MCF 10A (cell line): ENCODE measurements at regions of chr20 and their contacts with region 1.

Region 1: GRCh38 chr20:17431621-17432364 is 99.4 kb downstream of the BFSP1 start:
- DNase-seq: peak; percentile 67
- H3K4me3 Mint-ChIP-seq: no peak overlapping the region
- H3K27ac Mint-ChIP-seq: no peak overlapping the region
- H3K4me1 Mint-ChIP-seq: no peaks in the 10 kb centered on the region
- H3K27me3 Mint-ChIP-seq: peaks cover 61% of the 10 kb centered on the region
- CTCF ChIP-seq: peak; percentile 95

Region 2: DNA sequence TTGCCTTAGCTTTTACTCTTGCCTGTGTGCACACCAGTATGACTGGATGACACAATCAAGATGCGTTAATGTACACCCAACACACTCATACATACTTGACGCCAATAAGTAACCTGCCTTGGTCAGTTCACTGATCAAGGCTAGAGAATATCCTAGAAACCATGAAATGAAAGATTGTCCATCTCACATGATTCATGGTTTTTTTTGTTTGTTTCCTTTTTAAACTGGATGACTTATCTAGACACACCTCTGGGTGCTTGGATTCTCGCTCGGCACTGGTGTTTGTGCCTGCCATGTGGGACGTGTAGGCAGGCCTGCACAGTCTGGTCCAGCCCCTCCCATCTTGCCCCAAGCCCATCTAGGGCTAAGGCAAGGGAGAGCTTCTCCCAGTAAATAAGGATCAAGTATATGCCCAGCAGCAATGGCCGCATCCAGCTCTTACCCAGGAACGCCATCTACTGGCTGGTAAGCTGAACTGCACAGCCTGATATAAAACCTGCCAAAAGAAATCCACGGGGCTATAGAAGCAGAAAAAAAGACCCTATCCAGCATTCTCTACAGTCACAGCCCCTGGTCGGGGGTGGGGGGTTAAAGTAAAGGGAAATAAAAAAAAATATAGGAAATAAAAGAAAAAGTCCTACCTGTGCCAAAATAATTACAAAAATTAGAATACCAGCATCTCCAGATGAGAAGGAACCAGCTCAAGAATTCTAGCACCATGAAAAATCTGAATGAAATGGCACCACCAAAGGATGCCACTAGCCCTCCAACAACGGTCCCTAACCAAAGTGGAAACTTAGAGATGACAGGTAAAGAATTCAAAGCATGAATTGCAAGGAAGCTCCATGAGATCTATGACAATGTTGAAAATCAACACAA is 610.3 kb before region 1 on chr20:
- CTCF ChIA-PET with region 1: interaction called, 62 read pairs
- POLR2A ChIA-PET with region 1: no interaction called
- intact Hi-C with region 1: no loop called
- DNase-seq: peak; percentile 57
- H3K4me3 Mint-ChIP-seq: no peak overlapping the region
- H3K27ac Mint-ChIP-seq: no peak overlapping the region
- H3K4me1 Mint-ChIP-seq: no peaks in the 10 kb centered on the region
- H3K27me3 Mint-ChIP-seq: peaks cover 75% of the 10 kb centered on the region
- CTCF ChIP-seq: peak; percentile 88

Region 3: GRCh38 chr20:17349941-17350720 is 81.7 kb before region 1 on chr20:
- CTCF ChIA-PET with region 1: no interaction called
- POLR2A ChIA-PET with region 1: no interaction called
- intact Hi-C with region 1: no loop called
- DNase-seq: no peak
- H3K4me3 Mint-ChIP-seq: no peak overlapping the region
- H3K27ac Mint-ChIP-seq: no peak overlapping the region
- H3K4me1 Mint-ChIP-seq: no peaks in the 10 kb centered on the region
- H3K27me3 Mint-ChIP-seq: peaks cover 62% of the 10 kb centered on the region
- CTCF ChIP-seq: no peak

Region 4: GRCh38 chr20:17377231-17377630 is 54.6 kb before region 1 on chr20:
- CTCF ChIA-PET with region 1: interaction called, 17 read pairs
- POLR2A ChIA-PET with region 1: no interaction called
- intact Hi-C with region 1: no loop called
- DNase-seq: no peak
- H3K4me3 Mint-ChIP-seq: no peak overlapping the region
- H3K27ac Mint-ChIP-seq: no peak overlapping the region
- H3K4me1 Mint-ChIP-seq: no peaks in the 10 kb centered on the region
- H3K27me3 Mint-ChIP-seq: peaks cover 14% of the 10 kb centered on the region
- CTCF ChIP-seq: no peak

Region 5: DNA sequence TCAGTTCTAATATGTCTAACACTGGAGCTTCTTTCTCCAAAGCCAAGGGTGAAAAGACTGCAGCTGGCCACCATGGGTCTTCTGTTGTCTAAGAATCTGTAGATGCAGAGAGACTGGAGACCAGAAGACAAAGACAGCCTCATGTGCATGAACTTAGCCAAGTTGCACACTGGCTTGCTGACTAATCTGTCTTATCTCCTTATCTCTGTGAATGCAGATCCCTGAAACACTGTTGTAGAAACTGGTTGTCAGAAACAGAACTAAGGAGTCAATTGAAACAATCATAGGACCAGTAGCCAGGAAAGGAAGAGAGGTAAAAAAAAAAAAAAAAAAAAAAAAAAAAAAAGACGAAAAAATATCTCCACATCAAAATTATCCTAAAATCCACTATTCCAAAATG is 10.3 kb before region 1 on chr20:
- CTCF ChIA-PET with region 1: interaction called, 71 read pairs
- POLR2A ChIA-PET with region 1: no interaction called
- intact Hi-C with region 1: no loop called
- DNase-seq: no peak
- H3K4me3 Mint-ChIP-seq: no peak overlapping the region
- H3K27ac Mint-ChIP-seq: no peak overlapping the region
- H3K4me1 Mint-ChIP-seq: no peaks in the 10 kb centered on the region
- H3K27me3 Mint-ChIP-seq: peaks cover 65% of the 10 kb centered on the region
- CTCF ChIP-seq: no peak

Region 6: DNA sequence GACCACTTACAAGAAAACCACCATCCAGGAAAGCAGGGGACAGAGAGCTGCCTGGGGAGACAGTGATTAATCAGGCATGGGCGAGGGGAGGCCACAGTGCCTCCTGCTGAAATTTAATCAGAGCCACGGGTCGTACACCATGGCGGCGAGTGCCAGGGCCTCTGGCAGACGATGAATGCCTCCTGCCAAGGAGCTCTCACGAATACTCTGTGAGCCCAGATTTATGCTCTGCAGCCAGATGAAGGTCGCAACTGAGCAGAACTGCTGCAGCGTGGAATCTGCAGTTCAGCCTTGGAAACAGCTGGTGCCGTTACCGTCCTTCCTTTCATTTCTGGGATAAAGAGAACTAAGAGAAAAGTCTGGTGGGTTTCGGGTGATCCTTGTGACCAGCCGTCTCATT is 13.8 kb after region 1 on chr20:
- CTCF ChIA-PET with region 1: interaction called, 25 read pairs
- POLR2A ChIA-PET with region 1: no interaction called
- intact Hi-C with region 1: no loop called
- DNase-seq: no peak
- H3K4me3 Mint-ChIP-seq: no peak overlapping the region
- H3K27ac Mint-ChIP-seq: no peak overlapping the region
- H3K4me1 Mint-ChIP-seq: no peaks in the 10 kb centered on the region
- H3K27me3 Mint-ChIP-seq: peaks cover 55% of the 10 kb centered on the region
- CTCF ChIP-seq: no peak

Region 7: DNA sequence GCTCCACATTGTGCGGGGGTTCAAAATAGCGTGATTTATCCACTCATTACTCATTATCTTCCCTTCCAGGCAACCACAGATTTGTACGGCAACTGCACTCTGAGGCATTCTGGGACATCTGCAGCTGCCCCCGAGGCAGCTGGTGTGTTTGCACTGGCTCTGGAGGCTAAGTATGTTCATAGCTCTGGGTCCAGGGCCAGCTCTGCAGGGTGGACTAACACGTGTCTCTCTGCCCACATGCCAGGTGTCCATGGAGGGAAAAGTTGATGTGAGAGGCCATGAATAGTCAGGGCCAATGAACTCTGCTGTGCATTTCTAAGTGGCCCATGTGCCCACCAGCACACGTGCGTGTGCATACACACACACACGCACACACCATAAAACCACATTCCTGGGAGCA is 24.5 kb after region 1 on chr20:
- CTCF ChIA-PET with region 1: interaction called, 16 read pairs
- POLR2A ChIA-PET with region 1: no interaction called
- intact Hi-C with region 1: no loop called
- DNase-seq: no peak
- H3K4me3 Mint-ChIP-seq: no peak overlapping the region
- H3K27ac Mint-ChIP-seq: no peak overlapping the region
- H3K4me1 Mint-ChIP-seq: no peaks in the 10 kb centered on the region
- H3K27me3 Mint-ChIP-seq: peaks cover 39% of the 10 kb centered on the region
- CTCF ChIP-seq: no peak